IMR-90 (cell line): ENCODE measurements at regions of chr5 and their contacts with region 1.

Region 1: DNA sequence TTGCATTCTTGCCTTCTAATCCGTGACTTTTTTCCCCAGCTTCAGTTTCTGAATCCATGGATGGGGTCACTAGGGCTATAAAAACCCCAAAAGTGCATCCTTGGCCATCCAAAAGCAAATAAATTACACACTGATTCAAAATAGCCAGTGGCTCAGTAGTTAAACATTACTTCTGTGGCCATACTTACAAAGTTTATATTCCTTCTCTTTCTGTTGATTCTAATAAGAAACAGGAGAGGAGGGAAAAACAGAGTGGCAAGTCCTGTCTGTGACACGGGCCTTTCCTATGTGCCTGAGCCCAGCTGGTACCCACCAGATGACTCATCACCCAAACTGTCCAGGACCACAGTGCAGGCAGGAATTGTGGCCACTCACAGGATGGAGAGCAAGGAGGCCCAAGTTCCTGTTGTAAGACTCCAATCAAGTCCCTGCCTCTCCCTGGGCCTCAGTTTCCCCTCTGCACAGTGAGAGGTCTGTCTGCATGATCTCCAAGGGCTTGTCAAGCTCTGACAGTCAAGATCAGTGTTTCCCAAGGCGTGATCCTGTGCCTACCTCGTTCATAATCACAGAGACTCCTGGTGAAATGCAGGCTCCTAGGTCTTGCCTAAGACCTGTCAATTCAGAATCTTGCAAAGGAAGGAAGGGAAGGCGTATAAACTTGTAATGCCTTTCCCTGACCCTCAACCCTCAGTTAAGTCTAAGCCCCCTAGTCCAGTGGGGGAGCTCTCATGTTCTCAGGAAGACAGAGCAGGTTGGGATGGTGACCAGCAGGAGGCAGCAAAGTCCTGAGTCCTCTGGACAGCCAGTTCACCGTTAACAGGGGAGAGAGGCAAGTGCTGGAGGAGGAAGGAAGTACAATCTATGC is 29.5 kb downstream of the TNIP1 start:
- DNase-seq: peak; percentile 75
- ATAC-seq: peak; percentile 96
- H3K4me3 ChIP-seq: no peak overlapping the region
- H3K27ac ChIP-seq: no peak overlapping the region
- H3K4me1 ChIP-seq: peaks cover 6% of the 10 kb centered on the region; the same call in 1 of the 2 replicates
- H3K27me3 ChIP-seq: no peaks in the 10 kb centered on the region
- CTCF ChIP-seq: peak; percentile 91
- POLR2A ChIP-seq: no peak
- RAD21 ChIP-seq: peak; percentile 94

Region 2: DNA sequence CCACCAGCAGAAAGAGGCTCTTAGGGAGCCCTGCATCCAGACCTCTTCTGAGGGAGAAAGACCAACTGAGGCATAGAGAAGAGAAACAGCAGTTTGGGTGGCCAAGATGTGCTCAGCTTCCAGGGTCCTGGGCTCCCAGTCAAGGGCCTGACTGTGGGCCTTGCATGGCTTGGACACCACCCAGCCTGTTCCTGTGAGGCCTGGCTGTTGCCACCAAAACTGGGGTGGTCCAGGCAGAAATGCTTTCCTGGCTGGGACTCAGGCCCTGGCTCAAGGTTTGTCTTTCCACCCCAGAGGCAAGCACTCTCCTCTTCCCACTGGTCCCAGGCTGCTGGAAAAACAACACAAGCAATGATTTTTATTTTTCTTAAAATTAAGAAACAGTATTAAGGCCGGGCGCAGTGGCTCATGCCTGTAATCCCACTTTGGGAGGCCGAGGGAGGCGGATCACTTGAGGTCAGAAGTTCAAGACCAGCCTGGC is 376.9 kb before region 1 on chr5:
- CTCF ChIA-PET with region 1: no interaction called
- POLR2A ChIA-PET with region 1: no interaction called
- dilution Hi-C with region 1: no loop called
- in situ Hi-C with region 1: no loop called
- intact Hi-C with region 1: no loop called
- DNase-seq: no peak
- ATAC-seq: no peak; the same call in 1 of the 2 replicates
- H3K4me3 ChIP-seq: no peak overlapping the region
- H3K27ac ChIP-seq: no peak overlapping the region; the same call in 1 of the 2 replicates
- H3K4me1 ChIP-seq: peaks cover 13% of the 10 kb centered on the region
- H3K27me3 ChIP-seq: peaks cover 12% of the 10 kb centered on the region
- CTCF ChIP-seq: no peak
- POLR2A ChIP-seq: no peak
- RAD21 ChIP-seq: no peak

Region 3: DNA sequence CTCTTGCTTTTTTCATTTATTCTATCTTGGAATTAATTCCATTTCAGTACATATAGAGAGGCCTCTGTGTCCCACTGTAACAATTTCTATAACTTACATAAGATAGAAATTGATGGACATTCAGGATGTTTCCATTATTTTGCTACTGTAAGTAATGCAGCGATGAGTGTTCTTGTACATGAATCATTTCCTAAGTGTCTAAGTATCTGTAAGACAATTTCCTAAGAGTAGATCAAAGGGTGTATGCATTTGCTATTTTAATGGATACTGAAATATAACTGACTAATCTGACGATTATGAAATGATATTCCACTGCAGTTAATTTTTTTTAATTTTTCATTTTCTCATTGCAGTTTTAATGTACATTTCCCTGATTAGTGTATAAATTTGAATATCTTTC is 327.5 kb before region 1 on chr5:
- CTCF ChIA-PET with region 1: no interaction called
- POLR2A ChIA-PET with region 1: no interaction called
- dilution Hi-C with region 1: no loop called
- in situ Hi-C with region 1: no loop called
- intact Hi-C with region 1: no loop called
- DNase-seq: no peak
- ATAC-seq: no peak
- H3K4me3 ChIP-seq: no peak overlapping the region
- H3K27ac ChIP-seq: no peak overlapping the region
- H3K4me1 ChIP-seq: no peaks in the 10 kb centered on the region
- H3K27me3 ChIP-seq: no peaks in the 10 kb centered on the region
- CTCF ChIP-seq: no peak
- POLR2A ChIP-seq: no peak
- RAD21 ChIP-seq: no peak

Region 4: GRCh38 chr5:151002250-151002649 is 49.0 kb before region 1 on chr5:
- CTCF ChIA-PET with region 1: interaction called, 4 read pairs
- POLR2A ChIA-PET with region 1: no interaction called
- dilution Hi-C with region 1: no loop called
- in situ Hi-C with region 1: no loop called
- intact Hi-C with region 1: loop called (anchors 2 kb)
- DNase-seq: peak; percentile 41
- ATAC-seq: peak; percentile 46
- H3K4me3 ChIP-seq: no peak overlapping the region
- H3K27ac ChIP-seq: no peak overlapping the region
- H3K4me1 ChIP-seq: peaks cover 12% of the 10 kb centered on the region; the same call in 1 of the 2 replicates
- H3K27me3 ChIP-seq: peaks cover 11% of the 10 kb centered on the region
- CTCF ChIP-seq: peak; percentile 64
- POLR2A ChIP-seq: no peak
- RAD21 ChIP-seq: peak; percentile 72